Posterior vena cava (tissue), 2 donors: ENCODE measurements at regions of chr2 and their contacts with region 1.

Region 1: DNA sequence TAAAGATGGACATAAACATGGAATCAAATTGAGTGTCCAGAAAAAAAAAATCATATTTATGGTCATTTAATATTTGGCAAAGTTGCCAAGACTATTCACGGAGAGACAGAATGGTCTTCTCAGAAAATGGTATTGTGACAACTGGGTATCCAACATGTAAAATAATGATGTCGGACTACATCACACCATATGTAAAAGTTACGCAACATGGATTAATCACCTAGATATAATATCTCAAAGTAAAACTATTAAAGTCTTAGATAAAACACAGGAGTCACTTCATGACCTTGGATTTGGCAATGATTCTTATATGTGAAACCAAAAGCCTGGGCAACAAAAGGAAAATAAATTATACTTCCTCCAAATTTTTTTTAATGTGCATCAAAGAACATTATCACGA is 1591.7 kb upstream of the DDX18 start:
- DNase-seq: no peak

Region 2: GRCh38 chr2:116180072-116180471 is 42.7 kb before region 1 on chr2:
- intact Hi-C with region 1: loop called in 1 of 2 experiments (anchors 1 kb)
- DNase-seq: no peak

Region 3: GRCh38 chr2:116517936-116518335 is 295.1 kb after region 1 on chr2:
- intact Hi-C with region 1: no loop called
- DNase-seq: no peak

Region 4: GRCh38 chr2:116975608-116976007 is 752.8 kb after region 1 on chr2:
- intact Hi-C with region 1: no loop called
- DNase-seq: no peak